PC-9 (cell line): ENCODE measurements at regions of chr4 and their contacts with region 1.

Region 1: DNA sequence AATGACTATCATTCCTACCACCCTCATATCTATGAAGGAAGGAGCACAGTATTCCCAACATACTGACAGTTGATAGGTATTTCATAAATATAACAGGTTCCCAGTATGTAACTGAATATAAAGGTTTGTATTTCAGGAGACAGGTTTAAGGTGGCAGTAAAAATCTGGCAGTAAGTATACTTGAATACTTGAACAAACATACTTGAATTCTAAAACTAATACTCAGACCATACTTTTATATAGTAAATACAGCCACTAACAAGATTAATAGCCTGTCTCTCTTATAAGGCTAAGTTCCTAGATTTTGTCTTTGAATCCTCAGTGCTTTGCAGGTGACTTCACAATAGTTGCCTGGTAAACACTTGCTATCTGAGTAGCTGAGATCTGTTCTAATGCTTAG is 37.8 kb downstream of the GABRA4 start:
- DNase-seq: no peak
- H3K4me3 ChIP-seq: no peak overlapping the region
- H3K27ac ChIP-seq: no peak overlapping the region
- H3K4me1 ChIP-seq: no peaks in the 10 kb centered on the region
- H3K27me3 ChIP-seq: no peaks in the 10 kb centered on the region
- CTCF ChIP-seq: no peak

Region 2: DNA sequence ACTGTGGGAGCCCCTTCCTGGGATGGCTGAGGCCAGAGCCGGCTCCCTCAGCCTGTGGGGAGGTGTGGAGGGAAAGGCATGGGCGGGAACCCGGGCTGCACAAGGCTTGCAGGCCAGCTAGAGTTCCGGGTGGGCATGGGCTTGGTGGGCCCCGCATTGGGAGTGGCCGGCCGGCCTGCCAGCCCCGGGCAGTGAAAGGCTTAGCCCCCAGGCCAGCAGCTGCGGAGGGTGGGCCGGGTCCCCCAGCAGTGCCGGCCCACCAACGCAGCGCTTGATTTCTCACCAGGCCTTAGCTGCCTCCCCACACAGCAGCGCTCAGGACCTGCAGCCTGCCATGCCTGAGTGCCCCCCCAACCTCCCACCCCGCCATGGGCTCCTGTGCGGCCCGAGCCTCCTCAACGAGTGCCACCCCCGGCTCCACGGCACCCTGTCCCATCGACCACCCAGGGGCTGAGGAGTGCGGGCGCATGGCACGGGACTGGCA is 124.6 kb before region 1 on chr4:
- CTCF ChIA-PET with region 1: no interaction called
- POLR2A ChIA-PET with region 1: interaction called, 11 read pairs
- intact Hi-C with region 1: no loop called
- DNase-seq: no peak
- H3K4me3 ChIP-seq: no peak overlapping the region
- H3K27ac ChIP-seq: no peak overlapping the region
- H3K4me1 ChIP-seq: no peaks in the 10 kb centered on the region
- H3K27me3 ChIP-seq: no peaks in the 10 kb centered on the region
- CTCF ChIP-seq: no peak